Naive thymus-derived CD4-positive, alpha-beta T cell (primary cell): ENCODE measurements at regions of chr14 and their contacts with region 1.

Region 1: GRCh38 chr14:73785873-73786695 is 65.5 kb upstream of the PTGR2 start:
- DNase-seq: peak; percentile 41 to 65 (median 60)
- ATAC-seq: peak; percentile 74
- H3K4me3 ChIP-seq: peak overlapping the region; percentile 91
- H3K4me3 Mint-ChIP-seq: peak overlapping the region; percentile 87 to 99 (median 97)
- H3K27ac ChIP-seq: peak overlapping the region; percentile 96
- H3K27ac Mint-ChIP-seq: peak overlapping the region; percentile 92 to 97 (median 94)
- H3K4me1 ChIP-seq: peaks cover 45% of the 10 kb centered on the region in 2 donors
- H3K4me1 Mint-ChIP-seq: peaks cover 50 to 73% (median 66%) of the 10 kb centered on the region in 7 donors
- H3K27me3 ChIP-seq: no peaks in the 10 kb centered on the region
- H3K27me3 Mint-ChIP-seq: no peaks in the 10 kb centered on the region

Region 2: GRCh38 chr14:73568381-73568781 is 217.7 kb before region 1 on chr14:
- CTCF ChIA-PET with region 1: no interaction called
- POLR2A ChIA-PET with region 1: no interaction called
- intact Hi-C with region 1: no loop called
- DNase-seq: no peak
- ATAC-seq: no peak
- H3K4me3 ChIP-seq: peak overlapping the region; percentile 73
- H3K4me3 Mint-ChIP-seq: peak overlapping the region; percentile 92 to 97 (median 94)
- H3K27ac ChIP-seq: peak overlapping the region; percentile 77
- H3K27ac Mint-ChIP-seq: peak overlapping the region; percentile 92 to 98 (median 95)
- H3K4me1 ChIP-seq: peaks cover 21% of the 10 kb centered on the region in 2 donors
- H3K4me1 Mint-ChIP-seq: peaks cover 29 to 52% (median 44%) of the 10 kb centered on the region in 7 donors
- H3K27me3 ChIP-seq: no peaks in the 10 kb centered on the region
- H3K27me3 Mint-ChIP-seq: no peaks in the 10 kb centered on the region

Region 3: DNA sequence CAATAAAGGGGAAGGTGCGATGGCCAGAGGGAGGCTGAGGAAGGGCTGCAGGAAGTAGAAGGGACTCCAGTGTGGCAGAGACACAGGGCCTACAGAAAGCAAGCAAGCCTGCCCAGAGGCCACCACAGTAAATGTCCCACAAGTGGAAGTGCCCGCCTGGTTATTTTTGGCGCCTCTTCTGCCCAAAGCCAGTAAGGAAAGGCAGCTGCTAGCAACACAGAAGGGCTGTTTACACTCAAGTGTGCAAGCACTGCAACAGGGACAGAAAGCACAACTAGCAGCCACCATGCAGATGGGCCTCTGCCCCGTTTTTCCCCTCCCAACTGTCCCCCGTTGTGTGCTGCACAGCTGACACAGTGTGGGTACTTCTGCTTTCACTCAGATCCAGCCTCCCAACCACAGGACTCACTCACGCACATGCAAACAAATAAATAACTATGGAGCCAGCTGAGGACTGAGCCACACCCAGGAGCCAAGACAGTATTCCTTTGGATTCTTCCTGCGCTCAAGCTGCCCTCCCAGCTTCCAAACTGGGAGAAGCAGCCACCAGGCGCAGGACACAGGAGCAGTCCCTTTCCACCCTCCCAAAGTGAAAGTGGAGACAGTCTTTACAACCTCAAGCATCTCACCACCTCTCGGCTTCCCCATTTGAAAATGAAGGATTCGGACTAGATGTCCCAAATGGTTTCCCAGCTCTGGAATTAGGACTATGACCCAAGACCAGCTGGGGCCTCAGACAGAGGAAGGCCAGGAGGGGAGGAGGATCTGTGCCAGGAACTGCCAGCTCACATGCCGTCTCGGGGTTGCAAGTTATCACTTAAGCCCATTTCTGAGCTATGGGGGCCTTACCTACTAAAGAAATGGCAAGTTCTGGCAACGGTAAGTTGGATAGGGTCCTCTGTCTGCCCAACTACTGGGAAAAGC is 31.9 kb before region 1 on chr14:
- CTCF ChIA-PET with region 1: interaction called, 23 read pairs
- POLR2A ChIA-PET with region 1: interaction called, 253 read pairs
- intact Hi-C with region 1: no loop called
- DNase-seq: peak in 2 of 9 donors; percentile 29 to 45
- ATAC-seq: peak; percentile 53
- H3K4me3 ChIP-seq: peak overlapping the region; percentile 59
- H3K4me3 Mint-ChIP-seq: peak overlapping the region; percentile 83 to 97 (median 90)
- H3K27ac ChIP-seq: peak overlapping the region; percentile 86
- H3K27ac Mint-ChIP-seq: peak overlapping the region; percentile 84 to 99 (median 99)
- H3K4me1 ChIP-seq: peaks cover 85 to 86% of the 10 kb centered on the region in 2 donors
- H3K4me1 Mint-ChIP-seq: peaks cover 79 to 95% (median 93%) of the 10 kb centered on the region in 7 donors
- H3K27me3 ChIP-seq: no peaks in the 10 kb centered on the region
- H3K27me3 Mint-ChIP-seq: no peaks in the 10 kb centered on the region

Region 4: DNA sequence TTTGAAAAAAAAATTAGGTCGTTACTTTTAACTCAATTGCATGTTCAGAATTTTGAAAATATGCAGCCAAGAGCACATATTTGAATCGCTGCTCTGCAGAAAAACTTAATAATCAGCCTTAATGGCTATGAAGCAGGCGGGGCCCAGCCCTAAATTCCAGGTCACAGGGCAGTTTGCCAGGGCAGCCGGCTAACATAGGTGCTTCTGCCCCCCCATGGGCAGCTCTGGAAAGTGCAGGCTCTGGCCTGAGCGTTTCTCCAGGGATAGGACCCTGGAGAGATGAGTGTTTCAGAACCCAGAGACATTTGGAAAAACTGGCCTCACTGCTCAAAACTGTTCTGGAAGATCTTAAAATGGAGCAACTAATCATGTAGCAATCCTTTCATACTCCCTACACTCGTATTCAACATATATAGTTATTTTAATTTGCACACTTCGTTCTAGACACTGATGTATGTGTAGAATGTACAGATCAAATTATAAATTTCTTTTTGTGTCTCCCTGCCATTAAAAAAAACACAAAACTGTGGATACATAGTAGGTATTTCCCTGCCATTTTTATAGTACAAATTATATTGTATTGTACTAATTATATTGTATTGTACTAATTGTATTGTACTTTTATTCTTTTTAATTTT is 39.6 kb after region 1 on chr14:
- CTCF ChIA-PET with region 1: interaction called, 16 read pairs
- POLR2A ChIA-PET with region 1: interaction called, 4 read pairs
- intact Hi-C with region 1: loop called (anchors 1 kb)
- DNase-seq: peak; percentile 51 to 76 (median 66)
- ATAC-seq: peak; percentile 96
- H3K4me3 ChIP-seq: no peak overlapping the region
- H3K4me3 Mint-ChIP-seq: no peak overlapping the region
- H3K27ac ChIP-seq: no peak overlapping the region
- H3K27ac Mint-ChIP-seq: no peak overlapping the region
- H3K4me1 ChIP-seq: no peaks in the 10 kb centered on the region
- H3K4me1 Mint-ChIP-seq: peaks cover 0 to 21% (median 0%) of the 10 kb centered on the region in 7 donors
- H3K27me3 ChIP-seq: no peaks in the 10 kb centered on the region
- H3K27me3 Mint-ChIP-seq: peaks cover 0 to 3% (median 0%) of the 10 kb centered on the region in 5 donors

Region 5: GRCh38 chr14:73886449-73887317 is 100.6 kb after region 1 on chr14 and contains the start of gene ZNF410:
- CTCF ChIA-PET with region 1: no interaction called
- POLR2A ChIA-PET with region 1: interaction called, 3 read pairs
- intact Hi-C with region 1: loop called in 1 of 2 experiments (anchors 2 kb)
- DNase-seq: peak; percentile 74 to 94 (median 83)
- ATAC-seq: peak; percentile 99
- H3K4me3 ChIP-seq: peak within 1 kb of the TSS; percentile 82
- H3K4me3 Mint-ChIP-seq: peak within 1 kb of the TSS; percentile 90 to 99 (median 98)
- H3K27ac ChIP-seq: peak within 1 kb of the TSS; percentile 97
- H3K27ac Mint-ChIP-seq: peak within 1 kb of the TSS; percentile 64 to 100 (median 99)
- H3K4me1 ChIP-seq: peaks cover 17 to 22% of the 10 kb centered on the region in 2 donors
- H3K4me1 Mint-ChIP-seq: peaks cover 24 to 56% (median 47%) of the 10 kb centered on the region in 7 donors
- H3K27me3 ChIP-seq: no peaks in the 10 kb centered on the region
- H3K27me3 Mint-ChIP-seq: no peaks in the 10 kb centered on the region
- total RNA-seq, gene ZNF410: 44.8 to 79.7 (median 51.1) TPM

Region 6: DNA sequence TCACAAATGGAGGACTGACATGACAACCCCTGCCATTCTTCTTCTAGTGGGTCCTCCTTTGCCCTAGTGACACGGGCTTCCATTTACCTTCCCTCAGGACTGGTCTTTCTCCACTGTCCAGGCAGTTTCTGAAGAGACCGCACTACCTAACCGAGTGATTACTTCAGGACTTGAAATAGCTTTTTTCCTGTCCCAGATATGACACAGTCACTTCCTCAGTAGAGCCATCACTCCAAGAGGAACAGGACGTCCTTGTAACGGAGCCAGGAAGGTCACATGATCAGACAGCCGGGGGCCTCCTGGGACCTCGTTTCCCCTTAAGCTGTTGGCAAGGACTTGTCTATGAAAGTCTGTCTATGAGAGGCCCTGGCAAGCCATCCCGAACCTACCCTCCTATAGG is 1554.8 kb after region 1 on chr14:
- CTCF ChIA-PET with region 1: no interaction called
- POLR2A ChIA-PET with region 1: no interaction called
- intact Hi-C with region 1: no loop called
- DNase-seq: no peak
- ATAC-seq: peak; percentile 41
- H3K4me3 ChIP-seq: no peak overlapping the region
- H3K4me3 Mint-ChIP-seq: no peak overlapping the region
- H3K27ac ChIP-seq: no peak overlapping the region
- H3K27ac Mint-ChIP-seq: no peak overlapping the region
- H3K4me1 ChIP-seq: no peaks in the 10 kb centered on the region
- H3K4me1 Mint-ChIP-seq: peaks cover 0 to 5% (median 2%) of the 10 kb centered on the region in 7 donors
- H3K27me3 ChIP-seq: no peaks in the 10 kb centered on the region
- H3K27me3 Mint-ChIP-seq: peaks cover 0 to 14% (median 3%) of the 10 kb centered on the region in 5 donors